HCT116 (cell line): ENCODE measurements at regions of chr19 and their contacts with region 1.

Region 1: DNA sequence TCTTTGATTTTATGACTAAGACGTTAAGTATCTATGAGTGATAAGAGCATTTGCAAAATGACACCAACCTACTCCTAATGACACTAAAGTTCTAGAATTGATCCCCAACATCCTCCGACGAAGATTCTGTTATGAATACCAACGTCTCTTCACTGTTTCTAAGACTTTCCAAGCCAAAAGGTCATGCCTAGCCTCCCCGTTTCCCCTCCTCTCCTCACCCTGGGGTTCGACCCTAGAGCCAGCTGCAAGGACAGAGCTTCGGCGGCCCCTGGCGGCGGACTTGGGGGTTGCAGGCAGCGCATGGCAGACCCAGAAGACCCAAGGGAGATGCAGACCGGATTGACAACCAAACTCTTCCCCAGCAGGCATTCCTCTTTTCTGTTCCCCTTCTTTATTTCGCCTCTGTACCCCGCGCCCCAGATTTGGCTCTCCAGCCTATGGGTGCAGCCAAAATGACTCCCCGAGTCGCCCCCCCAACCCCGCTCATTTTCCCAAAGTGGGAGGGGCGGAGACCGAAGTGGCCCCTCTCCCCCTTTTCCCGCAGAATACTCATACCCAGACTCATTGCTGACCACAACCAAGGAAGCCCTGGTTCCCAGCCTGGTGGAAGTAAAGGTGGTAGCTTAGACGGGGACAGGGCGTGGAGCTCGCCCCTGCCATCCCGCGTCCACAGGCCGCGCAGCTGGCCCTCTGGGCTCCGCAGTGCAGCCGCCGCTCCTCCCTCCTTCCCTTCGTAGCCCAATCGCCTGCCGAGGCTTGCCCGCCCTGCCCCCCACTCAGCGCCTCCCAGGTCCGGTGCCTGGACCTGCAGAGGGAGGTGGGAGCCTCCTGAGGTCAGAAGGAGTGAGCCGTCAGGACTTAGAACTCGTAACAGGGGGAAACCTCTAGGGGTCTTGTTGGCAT is 4.1 kb upstream of the EML2 start:
- DNase-seq: peak; percentile 71
- ATAC-seq: no peak
- H3K4me3 ChIP-seq: peak overlapping the region; percentile 53; a peak in 3 of 4 replicates
- H3K27ac ChIP-seq: peak overlapping the region; percentile 79; the same call in 1 of the 2 replicates
- H3K4me1 ChIP-seq: peaks cover 28 to 68% of the 10 kb centered on the region in 2 experiments
- H3K27me3 ChIP-seq: no peaks in the 10 kb centered on the region
- CTCF ChIP-seq: peak; percentile 97 to 99 (median 99)
- POLR2A ChIP-seq: peak; percentile 21
- RAD21 ChIP-seq: peak; percentile 98

Region 2: DNA sequence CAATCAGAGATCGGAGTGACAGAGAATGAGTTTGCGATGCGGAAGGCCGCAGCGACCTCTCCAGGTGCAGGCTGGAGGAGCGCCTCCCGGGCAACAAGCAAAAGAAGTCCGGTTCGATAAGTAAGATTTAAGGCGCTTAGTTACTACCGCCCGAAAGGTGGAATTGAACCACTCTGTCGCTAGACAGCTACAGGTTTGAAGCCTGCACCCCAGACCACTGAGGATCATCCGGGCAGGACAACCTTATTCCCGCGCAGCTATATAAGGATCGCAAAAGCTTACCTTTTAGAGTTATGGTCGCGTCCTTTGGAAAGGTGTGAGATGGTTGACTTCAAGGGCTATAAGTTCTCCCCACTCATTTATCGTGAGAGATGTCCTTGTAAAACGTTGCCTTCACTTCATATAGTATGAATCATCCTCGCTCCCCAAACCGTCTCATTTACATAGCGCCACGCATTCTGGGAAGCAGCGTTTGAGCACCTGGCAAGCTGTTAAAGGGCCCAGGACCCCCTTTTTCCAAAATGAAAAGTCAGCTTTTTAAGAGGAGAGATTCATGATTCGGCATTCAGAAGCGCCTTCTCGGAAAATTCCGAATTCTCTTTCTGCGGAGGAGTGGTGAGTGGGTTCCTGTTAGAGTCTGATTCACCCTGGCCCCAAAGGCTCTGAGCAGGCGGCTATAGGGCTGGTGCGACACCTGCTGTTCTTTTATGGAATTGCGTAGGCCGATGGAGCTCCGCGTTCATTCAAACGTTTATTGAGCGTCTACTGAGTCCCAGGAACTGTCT is 164.6 kb before region 1 on chr19:
- CTCF ChIA-PET with region 1: interaction called, 18 read pairs
- POLR2A ChIA-PET with region 1: no interaction called
- RAD21 ChIA-PET with region 1: interaction called in 1 of 2 experiments, 3 read pairs
- intact Hi-C with region 1: no loop called
- DNase-seq: peak; percentile 95
- ATAC-seq: peak; percentile 95
- H3K4me3 ChIP-seq: peak overlapping the region; percentile 37 to 53
- H3K27ac ChIP-seq: peak overlapping the region; percentile 71
- H3K4me1 ChIP-seq: peaks cover 5 to 24% of the 10 kb centered on the region in 2 experiments; a peak in 3 of 4 replicates
- H3K27me3 ChIP-seq: no peaks in the 10 kb centered on the region
- CTCF ChIP-seq: peak; percentile 91 to 99 (median 98)
- POLR2A ChIP-seq: peak; percentile 80
- RAD21 ChIP-seq: peak; percentile 97

Region 3: GRCh38 chr19:45523642-45524256 is 119.5 kb before region 1 on chr19:
- CTCF ChIA-PET with region 1: no interaction called
- POLR2A ChIA-PET with region 1: no interaction called
- RAD21 ChIA-PET with region 1: no interaction called
- intact Hi-C with region 1: loop called (anchors 1 kb)
- DNase-seq: peak; percentile 76
- ATAC-seq: peak; percentile 85
- H3K4me3 ChIP-seq: no peak overlapping the region
- H3K27ac ChIP-seq: peak overlapping the region; percentile 33
- H3K4me1 ChIP-seq: peaks cover 20 to 64% of the 10 kb centered on the region in 2 experiments; a peak in 3 of 4 replicates
- H3K27me3 ChIP-seq: no peaks in the 10 kb centered on the region
- CTCF ChIP-seq: peak; percentile 85 to 93 (median 90)
- POLR2A ChIP-seq: no peak
- RAD21 ChIP-seq: peak; percentile 95

Region 4: DNA sequence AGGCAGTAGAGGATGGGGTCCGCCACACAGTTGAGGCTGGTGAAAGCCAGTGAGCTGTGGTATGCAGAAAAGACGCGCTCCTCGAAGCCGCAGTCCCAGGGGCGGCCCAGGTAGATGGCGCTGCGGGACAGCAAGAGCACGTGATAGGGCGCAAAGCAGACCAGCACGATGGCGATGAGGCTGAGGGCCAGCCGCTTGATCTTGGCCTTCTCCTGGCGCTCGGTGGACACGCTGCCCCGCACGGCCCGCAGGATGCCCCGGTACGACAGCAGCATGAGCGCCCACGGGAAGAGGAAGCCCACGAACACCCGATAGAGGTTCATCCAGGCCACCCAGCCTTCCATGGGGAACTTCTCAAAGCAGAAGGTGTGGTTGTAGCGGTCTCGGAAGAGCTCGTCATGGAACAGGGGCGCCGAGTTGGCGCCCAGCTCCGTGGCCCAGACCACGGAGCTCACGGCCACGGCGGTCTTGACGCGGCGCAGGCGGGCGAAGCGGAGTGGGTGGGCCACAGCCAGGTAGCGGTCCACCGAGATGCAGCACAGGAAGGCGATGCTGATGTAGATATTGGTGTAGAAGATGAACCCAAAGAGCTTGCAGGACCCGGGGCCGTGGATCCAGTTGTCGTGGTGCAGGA is 52.2 kb before region 1 on chr19:
- CTCF ChIA-PET with region 1: interaction called, 40 read pairs
- POLR2A ChIA-PET with region 1: interaction called, 14 read pairs
- RAD21 ChIA-PET with region 1: interaction called, 7 to 17 read pairs
- intact Hi-C with region 1: loop called (anchors 1 kb)
- DNase-seq: no peak
- ATAC-seq: peak; percentile 99
- H3K4me3 ChIP-seq: no peak overlapping the region
- H3K27ac ChIP-seq: no peak overlapping the region; the same call in 1 of the 2 replicates
- H3K4me1 ChIP-seq: peaks cover 0 to 14% of the 10 kb centered on the region in 2 experiments; a peak in 2 of 4 replicates
- H3K27me3 ChIP-seq: no peaks in the 10 kb centered on the region
- CTCF ChIP-seq: peak; percentile 65 to 91 (median 70); a peak in 5 of 6 replicates
- POLR2A ChIP-seq: no peak
- RAD21 ChIP-seq: peak; percentile 92

Region 5: GRCh38 chr19:45630493-45630919 is 12.8 kb before region 1 on chr19:
- CTCF ChIA-PET with region 1: interaction called, 16 read pairs
- POLR2A ChIA-PET with region 1: interaction called, 11 read pairs
- RAD21 ChIA-PET with region 1: interaction called in 1 of 2 experiments, 3 read pairs
- intact Hi-C with region 1: no loop called
- DNase-seq: peak; percentile 67
- ATAC-seq: peak; percentile 61
- H3K4me3 ChIP-seq: no peak overlapping the region
- H3K27ac ChIP-seq: peak overlapping the region; percentile 69
- H3K4me1 ChIP-seq: peaks cover 32 to 47% of the 10 kb centered on the region in 2 experiments
- H3K27me3 ChIP-seq: no peaks in the 10 kb centered on the region
- CTCF ChIP-seq: no peak
- POLR2A ChIP-seq: no peak
- RAD21 ChIP-seq: no peak

Region 6: DNA sequence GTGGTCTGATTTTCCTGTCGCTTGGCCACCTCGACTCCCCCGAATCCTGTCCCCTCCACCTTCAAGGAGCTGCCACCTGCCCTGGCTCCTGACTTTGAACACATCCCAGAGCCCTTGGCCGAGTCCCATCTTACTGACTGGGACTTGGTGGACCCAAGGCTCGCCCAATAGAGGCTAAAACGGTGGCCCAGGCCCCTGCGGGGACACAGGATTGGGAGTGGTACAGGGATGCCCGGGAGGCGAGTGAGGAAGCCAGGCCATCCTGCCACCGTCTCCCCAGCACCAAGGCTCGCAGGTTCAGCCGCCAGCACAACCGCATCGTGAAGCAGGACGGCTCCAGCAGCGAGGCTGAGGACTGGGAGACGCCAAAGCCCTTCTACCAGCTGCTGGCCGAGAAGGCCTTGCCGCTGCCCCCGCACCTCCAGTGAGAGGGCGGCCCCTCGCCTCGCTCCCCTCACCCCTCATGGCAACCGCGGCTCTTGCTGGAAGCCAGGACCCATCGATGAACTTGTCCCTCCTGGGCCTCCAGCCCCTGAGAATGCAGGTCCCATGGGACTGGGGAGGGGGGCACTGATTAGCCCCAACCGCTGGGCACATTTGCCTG is 120.5 kb after region 1 on chr19:
- CTCF ChIA-PET with region 1: no interaction called
- POLR2A ChIA-PET with region 1: no interaction called
- RAD21 ChIA-PET with region 1: no interaction called
- intact Hi-C with region 1: no loop called
- DNase-seq: no peak
- ATAC-seq: no peak
- H3K4me3 ChIP-seq: no peak overlapping the region
- H3K27ac ChIP-seq: no peak overlapping the region
- H3K4me1 ChIP-seq: peaks cover 6 to 31% of the 10 kb centered on the region in 2 experiments; a peak in 3 of 4 replicates
- H3K27me3 ChIP-seq: no peaks in the 10 kb centered on the region
- CTCF ChIP-seq: no peak
- POLR2A ChIP-seq: no peak
- RAD21 ChIP-seq: no peak

Region 7: GRCh38 chr19:45939792-45940514 is 296.7 kb after region 1 on chr19:
- CTCF ChIA-PET with region 1: no interaction called
- POLR2A ChIA-PET with region 1: no interaction called
- RAD21 ChIA-PET with region 1: no interaction called
- intact Hi-C with region 1: no loop called
- DNase-seq: no peak
- ATAC-seq: no peak
- H3K4me3 ChIP-seq: no peak overlapping the region
- H3K27ac ChIP-seq: no peak overlapping the region
- H3K4me1 ChIP-seq: no peaks in the 10 kb centered on the region
- H3K27me3 ChIP-seq: peaks cover 5% of the 10 kb centered on the region; the same call in 1 of the 2 replicates
- CTCF ChIP-seq: no peak
- POLR2A ChIP-seq: no peak
- RAD21 ChIP-seq: no peak